ENCODE measurements at regions of chr13 and their contacts with region 1.

Region 1: GRCh38 chr13:113820813-113821651 is 42.8 kb downstream of the GAS6 start:
- DNase-seq: peak; percentile 40 to 69
- ATAC-seq: peak; percentile 71 to 85
- H3K4me3 ChIP-seq: no peak overlapping the region
- H3K27ac ChIP-seq: peak overlapping the region; percentile 76 to 92
- H3K4me1 ChIP-seq: peaks cover 30% of the 10 kb centered on the region
- CTCF ChIP-seq: no peak; the same call in 1 of the 3 replicates
- EP300 ChIP-seq: no peak
- POLR2A ChIP-seq: no peak
- RAD21 ChIP-seq: peak; percentile 24 to 40; a peak in 3 of 5 replicates

Region 2: DNA sequence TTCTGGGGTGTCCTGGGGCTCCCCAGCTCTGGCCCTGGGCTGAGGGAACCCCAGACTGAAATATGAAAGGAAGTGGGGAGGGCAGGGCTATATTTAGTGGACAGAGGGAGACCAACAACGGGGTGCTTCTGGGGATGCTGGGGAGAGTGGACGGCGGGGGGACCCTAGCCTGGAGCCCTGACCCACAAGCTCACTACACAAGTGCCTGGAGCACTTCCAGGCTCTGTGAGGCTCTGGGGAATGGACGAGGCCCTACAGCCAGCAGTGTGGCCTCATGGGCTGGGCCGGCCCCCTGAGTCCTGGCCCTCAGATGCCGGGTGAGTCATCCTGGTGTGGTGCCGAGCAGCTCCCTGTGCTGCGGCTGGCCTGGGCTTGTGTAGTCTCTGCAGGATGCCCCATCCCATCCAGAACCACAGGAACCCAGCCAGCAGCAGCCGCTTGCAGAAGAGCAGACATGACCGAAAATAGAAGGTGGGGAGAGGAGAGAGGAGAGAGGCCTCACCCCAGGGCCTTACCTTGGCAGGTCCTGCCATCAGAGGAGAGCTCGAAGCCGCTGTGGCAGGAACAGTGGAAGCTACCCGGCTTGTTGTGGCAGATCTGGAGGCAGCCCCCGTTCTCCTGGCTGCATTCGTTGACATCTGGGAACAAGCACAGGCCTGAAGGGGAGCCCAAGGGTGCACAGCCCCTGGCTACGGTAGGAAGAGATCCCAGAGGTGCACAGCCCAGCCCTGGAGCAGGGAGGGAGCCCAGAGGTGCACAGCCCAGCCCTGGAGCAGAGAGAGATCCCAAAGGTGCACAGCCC is 16.7 kb after region 1 on chr13:
- CTCF ChIA-PET with region 1: interaction called, 7 read pairs
- POLR2A ChIA-PET with region 1: interaction called, 10 read pairs
- DNase-seq: peak; percentile 62 to 86
- ATAC-seq: peak; percentile 87 to 94
- H3K4me3 ChIP-seq: peak overlapping the region; percentile 82
- H3K27ac ChIP-seq: peak overlapping the region; percentile 100
- H3K4me1 ChIP-seq: peaks cover 46% of the 10 kb centered on the region
- CTCF ChIP-seq: no peak
- EP300 ChIP-seq: no peak
- POLR2A ChIP-seq: peak; percentile 58
- RAD21 ChIP-seq: no peak; a peak in 1 of 5 replicates

Measured in A549 (cell line).